Heart right ventricle (tissue), 16 donors: ENCODE measurements at regions of chrX and their contacts with region 1.

Region 1: DNA sequence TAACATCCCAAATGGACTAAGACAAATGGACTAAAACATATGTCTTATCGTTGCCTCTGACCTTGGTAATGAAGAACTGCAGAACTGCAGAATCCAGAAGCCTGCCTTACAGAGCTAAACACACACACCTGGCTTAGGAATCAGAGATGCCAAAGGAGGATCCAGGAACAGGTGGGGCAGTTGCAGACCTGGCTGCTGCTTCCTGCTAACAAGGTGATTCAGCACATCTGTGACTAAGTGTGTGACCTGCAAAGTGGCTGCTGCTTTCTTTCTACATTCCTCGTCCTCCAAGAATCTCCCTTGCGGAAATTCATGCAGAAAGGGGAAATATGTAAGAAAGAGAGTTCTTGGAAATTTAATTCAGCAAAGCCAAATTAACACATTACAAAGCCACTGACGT is 96.8 kb upstream of the NLGN4X start:
- DNase-seq: no peak
- ATAC-seq: no peak
- H3K4me3 ChIP-seq: no peak overlapping the region
- H3K27ac ChIP-seq: no peak overlapping the region
- H3K4me1 ChIP-seq: no peaks in the 10 kb centered on the region
- H3K27me3 ChIP-seq: no peaks in the 10 kb centered on the region
- CTCF ChIP-seq: no peak

Region 2: GRCh38 chrX:4708970-4709715 is 1616.3 kb before region 1 on chrX:
- intact Hi-C with region 1: loop called in 1 of 10 experiments (anchors 5 kb)
- DNase-seq: no peak
- ATAC-seq: no peak
- H3K4me3 ChIP-seq: no peak overlapping the region
- H3K27ac ChIP-seq: no peak overlapping the region
- H3K4me1 ChIP-seq: no peaks in the 10 kb centered on the region
- H3K27me3 ChIP-seq: no peaks in the 10 kb centered on the region
- CTCF ChIP-seq: no peak